Activated CD4-positive, alpha-beta T cell treated with anti-CD3 and anti-CD28 coated beads, Interleukin-2, amount 10 ng/mL, durations not matched to agents 24 days and 14 days (primary cell): ENCODE measurements at regions of chr17 and their contacts with region 1.

Region 1: GRCh38 chr17:7435221-7435675 is at the start of gene TMEM102:
- DNase-seq: peak; percentile 99
- H3K4me3 Mint-ChIP-seq: peak within 1 kb of the TSS; percentile 93
- H3K27ac Mint-ChIP-seq: peak within 1 kb of the TSS; percentile 98
- H3K4me1 Mint-ChIP-seq: peaks cover 31% of the 10 kb centered on the region
- H3K27me3 Mint-ChIP-seq: peaks cover 7% of the 10 kb centered on the region
- total RNA-seq, gene TMEM102: 12.8 and 12.9 TPM in 2 replicates

Region 2: GRCh38 chr17:7214300-7215135 is 220.7 kb before region 1 on chr17:
- intact Hi-C with region 1: loop called (anchors 5 kb)
- DNase-seq: peak; percentile 100
- H3K4me3 Mint-ChIP-seq: peak overlapping the region; percentile 96
- H3K27ac Mint-ChIP-seq: peak overlapping the region; percentile 99
- H3K4me1 Mint-ChIP-seq: peaks cover 56% of the 10 kb centered on the region
- H3K27me3 Mint-ChIP-seq: peaks cover 18% of the 10 kb centered on the region

Region 3: GRCh38 chr17:7351665-7352501 is 83.4 kb before region 1 on chr17 and contains the start of gene KCTD11:
- intact Hi-C with region 1: loop called (anchors 1 kb)
- DNase-seq: peak; percentile 94
- H3K4me3 Mint-ChIP-seq: peak within 1 kb of the TSS; percentile 88
- H3K27ac Mint-ChIP-seq: peak within 1 kb of the TSS; percentile 92
- H3K4me1 Mint-ChIP-seq: peaks cover 33% of the 10 kb centered on the region
- H3K27me3 Mint-ChIP-seq: no peaks in the 10 kb centered on the region
- total RNA-seq, gene KCTD11: 7.0 and 7.6 TPM in 2 replicates

Region 4: DNA sequence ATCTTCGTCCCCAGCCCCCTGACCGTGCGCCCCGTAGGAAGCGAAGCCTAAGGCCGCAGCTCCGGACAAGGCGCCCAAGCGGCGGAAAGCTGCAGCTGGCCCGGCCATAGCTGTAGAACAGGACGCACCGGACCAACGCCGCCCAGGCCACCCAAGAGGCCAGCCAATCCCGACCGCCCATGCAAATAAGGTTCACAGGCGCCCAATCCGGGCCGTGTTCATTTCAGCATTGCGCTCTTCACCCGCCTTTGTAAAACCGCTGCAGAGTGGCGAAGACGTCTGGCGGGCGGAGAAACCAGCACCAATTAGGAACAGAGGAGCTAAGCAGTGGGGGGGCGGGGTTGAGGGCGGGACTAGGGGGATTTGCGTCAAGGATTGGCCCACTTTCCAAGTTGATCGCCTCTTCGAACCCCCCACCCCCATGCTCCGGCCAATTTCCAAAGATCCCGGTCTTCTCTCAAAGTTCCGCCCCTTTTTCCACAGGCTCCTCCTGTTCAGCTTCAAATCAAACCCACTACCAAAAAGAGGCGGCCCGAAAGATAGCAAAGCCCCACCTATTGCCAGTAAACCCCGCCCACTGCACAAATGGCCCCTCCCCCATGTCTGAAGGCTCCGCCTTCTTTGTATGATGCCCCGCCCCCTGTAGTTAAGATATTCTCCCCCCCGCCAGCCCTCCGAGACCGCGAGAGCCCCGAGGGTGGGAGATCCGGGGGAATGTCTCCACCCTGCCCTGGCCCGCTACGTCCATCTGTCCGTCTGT is 31.1 kb before region 1 on chr17 and contains the start of gene TMEM256:
- intact Hi-C with region 1: loop called (anchors 1 kb)
- DNase-seq: peak; percentile 98
- H3K4me3 Mint-ChIP-seq: peak within 1 kb of the TSS; percentile 96
- H3K27ac Mint-ChIP-seq: peak within 1 kb of the TSS; percentile 96
- H3K4me1 Mint-ChIP-seq: peaks cover 21% of the 10 kb centered on the region
- H3K27me3 Mint-ChIP-seq: peaks cover 23% of the 10 kb centered on the region
- total RNA-seq, gene TMEM256: 47.4 and 59.3 TPM in 2 replicates

Region 5: DNA sequence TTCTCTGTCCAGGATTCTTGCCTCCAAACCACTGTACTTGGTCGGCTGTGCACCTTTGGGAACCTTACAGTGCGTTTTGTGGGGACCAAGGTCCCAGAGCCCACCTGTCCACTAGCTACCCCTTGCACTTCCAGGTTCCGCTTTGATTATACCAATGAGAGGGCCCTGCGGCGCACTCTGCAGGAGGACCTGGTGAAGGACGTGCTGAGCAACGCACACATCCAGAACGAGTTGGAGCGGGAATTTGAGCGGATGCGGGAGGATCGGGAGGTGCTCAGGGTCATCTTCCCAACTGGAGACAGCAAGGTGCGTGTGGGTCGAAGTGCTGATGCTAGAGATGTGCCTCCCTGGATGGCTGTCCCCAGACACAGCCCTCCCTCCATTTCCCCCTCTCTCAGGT is 67.7 kb after region 1 on chr17:
- intact Hi-C with region 1: no loop called
- DNase-seq: peak; percentile 71
- H3K4me3 Mint-ChIP-seq: no peak overlapping the region
- H3K27ac Mint-ChIP-seq: no peak overlapping the region
- H3K4me1 Mint-ChIP-seq: no peaks in the 10 kb centered on the region
- H3K27me3 Mint-ChIP-seq: no peaks in the 10 kb centered on the region

Region 6: DNA sequence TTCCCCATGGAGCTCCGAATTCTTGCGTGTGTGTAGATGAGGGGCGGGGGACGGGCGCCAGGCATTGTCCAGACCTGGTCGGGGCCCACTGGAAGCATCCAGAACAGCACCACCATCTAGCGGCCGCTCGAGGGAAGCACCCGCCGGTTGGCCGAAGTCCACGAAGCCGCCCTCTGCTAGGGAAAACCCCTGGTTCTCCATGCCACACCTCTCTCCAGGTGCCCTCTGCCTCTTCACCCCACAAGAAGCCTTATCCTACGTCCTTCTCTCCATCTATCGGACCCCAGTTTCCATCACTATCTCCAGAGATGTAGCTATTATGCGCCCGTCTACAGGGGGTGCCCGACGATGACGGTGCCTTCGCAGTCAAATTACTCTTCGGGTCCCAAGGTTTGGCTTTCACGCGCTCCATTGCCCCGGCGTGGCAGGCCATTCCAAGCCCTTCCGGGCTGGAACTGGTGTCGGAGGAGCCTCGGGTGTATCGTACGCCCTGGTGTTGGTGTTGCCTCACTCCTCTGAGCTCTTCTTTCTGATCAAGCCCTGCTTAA is 125.9 kb after region 1 on chr17:
- intact Hi-C with region 1: loop called (anchors 1 kb)
- DNase-seq: peak; percentile 96
- H3K4me3 Mint-ChIP-seq: peak overlapping the region; percentile 97
- H3K27ac Mint-ChIP-seq: peak overlapping the region; percentile 99
- H3K4me1 Mint-ChIP-seq: peaks cover 39% of the 10 kb centered on the region
- H3K27me3 Mint-ChIP-seq: peaks cover 2% of the 10 kb centered on the region